CD4-positive, alpha-beta T cell (primary cell): ENCODE measurements at regions of chr12 and their contacts with region 1.

Region 1: DNA sequence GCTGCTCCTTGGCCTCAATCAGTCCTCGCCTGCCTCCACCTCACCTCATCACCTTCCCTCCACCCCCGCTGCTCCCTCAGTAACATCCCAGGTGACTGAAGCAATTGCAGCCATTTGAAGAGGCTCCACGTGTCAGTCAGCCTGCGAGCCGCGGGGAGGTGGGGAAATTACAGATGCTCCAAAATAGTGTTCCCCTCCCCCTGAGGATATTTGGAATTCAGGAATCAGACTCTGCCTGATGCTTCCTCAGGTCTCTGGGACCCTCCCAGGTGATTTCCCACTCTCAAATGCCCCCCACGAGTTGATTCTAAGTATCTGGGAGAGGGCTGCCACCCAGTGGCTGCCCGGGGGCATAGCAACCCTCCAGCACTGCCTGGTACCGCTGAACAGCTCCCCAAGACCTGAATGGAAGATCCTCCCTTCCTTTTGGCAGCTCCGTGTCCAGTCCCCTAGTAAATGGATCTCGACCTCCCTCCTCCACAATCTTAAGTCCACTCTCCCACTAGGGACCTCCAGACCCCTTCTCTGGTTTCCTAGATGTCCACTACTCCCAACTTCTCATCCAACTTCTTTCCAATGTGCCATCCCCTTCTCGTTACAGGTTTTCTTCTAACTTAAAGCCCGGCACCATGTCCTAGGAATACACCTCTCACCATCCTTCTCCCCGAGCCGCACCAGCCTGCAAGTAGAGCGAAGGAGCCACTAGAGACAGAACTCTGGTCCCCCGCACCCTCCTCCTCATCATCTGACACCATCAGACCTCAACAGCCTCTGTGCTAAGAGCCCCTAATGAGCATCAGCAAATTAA is 1.4 kb upstream of the ASIC1 start:
- DNase-seq: peak; percentile 29 to 77 (median 44)
- ATAC-seq: peak; percentile 67
- H3K4me3 ChIP-seq: peak overlapping the region; percentile 3
- H3K4me3 Mint-ChIP-seq: peak overlapping the region; percentile 93
- H3K27ac ChIP-seq: no peak overlapping the region
- H3K27ac Mint-ChIP-seq: no peak overlapping the region
- H3K4me1 ChIP-seq: peaks cover 40% of the 10 kb centered on the region
- H3K4me1 Mint-ChIP-seq: peaks cover 40% of the 10 kb centered on the region
- H3K27me3 ChIP-seq: peaks cover 44 to 48% of the 10 kb centered on the region in 2 experiments
- H3K27me3 Mint-ChIP-seq: peaks cover 68% of the 10 kb centered on the region
- CTCF ChIP-seq: peak; percentile 88

Region 2: DNA sequence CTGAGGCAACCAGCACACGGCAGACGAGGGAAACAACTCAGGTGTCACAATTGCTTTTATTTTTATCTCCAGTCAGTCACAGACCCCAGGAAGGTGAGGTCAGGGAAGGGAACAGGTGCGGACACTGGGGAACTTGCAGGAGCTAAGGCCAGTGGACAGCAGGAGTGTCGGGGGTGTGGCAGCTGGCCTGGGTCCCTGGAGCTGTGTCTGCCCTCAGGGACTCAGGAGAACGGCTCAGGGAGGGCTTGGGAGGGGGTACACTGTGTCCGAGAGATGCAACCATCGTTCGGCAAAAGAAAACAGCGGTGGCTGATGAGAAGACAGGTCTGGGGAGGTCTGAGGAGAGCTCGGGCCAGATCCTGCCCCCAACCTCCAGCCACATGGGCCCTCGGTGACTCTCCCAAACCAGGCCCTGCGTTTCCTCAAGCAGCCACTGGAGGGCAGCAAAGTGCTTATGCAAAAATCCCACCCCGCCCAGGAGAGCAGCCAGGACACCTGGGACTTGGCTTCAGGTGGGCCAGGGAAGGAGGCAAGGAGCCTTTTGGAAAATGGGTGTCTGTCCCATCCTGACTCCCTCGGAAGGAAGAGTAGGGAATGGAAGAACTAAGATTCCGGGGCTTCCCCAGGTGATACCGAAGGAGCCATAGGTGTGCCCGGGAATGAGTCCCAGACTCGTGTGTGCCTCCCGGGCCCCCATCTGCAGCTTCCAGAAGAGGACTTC is 189.0 kb before region 1 on chr12:
- CTCF ChIA-PET with region 1: no interaction called
- POLR2A ChIA-PET with region 1: no interaction called
- intact Hi-C with region 1: loop called (anchors 1 to 5 kb)
- DNase-seq: peak; percentile 58 to 83 (median 66)
- ATAC-seq: peak; percentile 97
- H3K4me3 ChIP-seq: no peak overlapping the region
- H3K4me3 Mint-ChIP-seq: no peak overlapping the region
- H3K27ac ChIP-seq: no peak overlapping the region
- H3K27ac Mint-ChIP-seq: no peak overlapping the region
- H3K4me1 ChIP-seq: peaks cover 5% of the 10 kb centered on the region
- H3K4me1 Mint-ChIP-seq: no peaks in the 10 kb centered on the region
- H3K27me3 ChIP-seq: peaks cover 0 to 3% of the 10 kb centered on the region in 2 experiments
- H3K27me3 Mint-ChIP-seq: no peaks in the 10 kb centered on the region
- CTCF ChIP-seq: peak; percentile 95

Region 3: DNA sequence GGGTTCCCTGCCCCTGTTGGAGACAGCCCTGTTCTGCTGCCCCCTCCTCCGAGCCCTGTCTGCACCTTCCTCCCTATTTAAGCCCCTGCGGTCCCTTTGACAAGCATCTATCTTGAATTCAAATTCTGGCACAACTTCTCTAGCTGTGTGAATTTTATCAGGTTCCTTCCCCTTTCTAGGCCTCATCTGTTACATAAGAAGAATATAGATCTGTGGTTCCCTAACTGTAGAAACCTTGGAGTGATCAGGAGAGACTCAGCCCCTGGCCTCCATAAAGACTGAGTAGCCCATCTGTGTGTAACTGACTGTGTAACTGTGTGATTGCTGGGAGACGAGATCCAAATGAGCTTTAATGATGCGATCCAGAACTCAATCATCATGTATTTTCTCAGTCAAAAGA is 17.7 kb before region 1 on chr12:
- CTCF ChIA-PET with region 1: interaction called, 19 read pairs
- POLR2A ChIA-PET with region 1: no interaction called
- intact Hi-C with region 1: loop called (anchors 1 to 2 kb)
- DNase-seq: no peak
- ATAC-seq: no peak
- H3K4me3 ChIP-seq: no peak overlapping the region
- H3K4me3 Mint-ChIP-seq: no peak overlapping the region
- H3K27ac ChIP-seq: no peak overlapping the region
- H3K27ac Mint-ChIP-seq: no peak overlapping the region
- H3K4me1 ChIP-seq: no peaks in the 10 kb centered on the region
- H3K4me1 Mint-ChIP-seq: no peaks in the 10 kb centered on the region
- H3K27me3 ChIP-seq: peaks cover 0 to 3% of the 10 kb centered on the region in 2 experiments
- H3K27me3 Mint-ChIP-seq: peaks cover 23% of the 10 kb centered on the region
- CTCF ChIP-seq: no peak

Region 4: GRCh38 chr12:50043854-50044253 is 12.2 kb before region 1 on chr12:
- CTCF ChIA-PET with region 1: interaction called, 19 read pairs
- POLR2A ChIA-PET with region 1: no interaction called
- intact Hi-C with region 1: loop called (anchors 1 to 2 kb)
- DNase-seq: no peak
- ATAC-seq: no peak
- H3K4me3 ChIP-seq: no peak overlapping the region
- H3K4me3 Mint-ChIP-seq: no peak overlapping the region
- H3K27ac ChIP-seq: no peak overlapping the region
- H3K27ac Mint-ChIP-seq: no peak overlapping the region
- H3K4me1 ChIP-seq: no peaks in the 10 kb centered on the region
- H3K4me1 Mint-ChIP-seq: no peaks in the 10 kb centered on the region
- H3K27me3 ChIP-seq: peaks cover 0 to 2% of the 10 kb centered on the region in 2 experiments
- H3K27me3 Mint-ChIP-seq: peaks cover 17% of the 10 kb centered on the region
- CTCF ChIP-seq: no peak

Region 5: GRCh38 chr12:50562520-50563433 is 506.7 kb after region 1 on chr12:
- CTCF ChIA-PET with region 1: no interaction called
- POLR2A ChIA-PET with region 1: no interaction called
- intact Hi-C with region 1: no loop called
- DNase-seq: no peak
- ATAC-seq: no peak
- H3K4me3 ChIP-seq: no peak overlapping the region
- H3K4me3 Mint-ChIP-seq: no peak overlapping the region
- H3K27ac ChIP-seq: no peak overlapping the region
- H3K27ac Mint-ChIP-seq: no peak overlapping the region
- H3K4me1 ChIP-seq: no peaks in the 10 kb centered on the region
- H3K4me1 Mint-ChIP-seq: peaks cover 74% of the 10 kb centered on the region
- H3K27me3 ChIP-seq: no peaks in the 10 kb centered on the region
- H3K27me3 Mint-ChIP-seq: no peaks in the 10 kb centered on the region
- CTCF ChIP-seq: no peak